ENCODE measurements at regions of chr2 and their contacts with region 1.

Region 1: DNA sequence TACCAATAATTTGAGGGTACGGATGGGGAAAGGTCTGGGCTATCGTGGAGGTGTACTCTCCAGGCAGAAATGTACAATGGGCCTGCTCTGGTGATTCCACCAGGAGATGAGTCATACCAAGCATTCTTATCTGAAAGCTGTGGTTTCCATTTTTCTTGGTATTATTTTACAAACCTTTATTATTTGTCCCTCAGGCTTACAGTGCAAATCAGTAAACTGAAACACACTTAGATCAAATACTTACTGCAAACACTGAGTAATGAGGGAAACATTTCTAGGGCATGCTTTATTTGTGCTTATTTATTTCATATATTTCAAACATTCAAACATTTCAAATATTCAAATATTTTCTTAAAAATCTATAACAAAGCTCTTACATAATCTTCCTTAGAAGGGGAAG is 319.8 kb downstream of the RND3 start:
- DNase-seq: peak; percentile 95
- ATAC-seq: peak; percentile 71
- H3K4me3 ChIP-seq: no peak overlapping the region; the same call in 1 of the 2 replicates
- H3K27ac ChIP-seq: peak overlapping the region; percentile 96
- H3K4me1 ChIP-seq: peaks cover 52% of the 10 kb centered on the region
- H3K27me3 ChIP-seq: no peaks in the 10 kb centered on the region
- CTCF ChIP-seq: no peak

Region 2: DNA sequence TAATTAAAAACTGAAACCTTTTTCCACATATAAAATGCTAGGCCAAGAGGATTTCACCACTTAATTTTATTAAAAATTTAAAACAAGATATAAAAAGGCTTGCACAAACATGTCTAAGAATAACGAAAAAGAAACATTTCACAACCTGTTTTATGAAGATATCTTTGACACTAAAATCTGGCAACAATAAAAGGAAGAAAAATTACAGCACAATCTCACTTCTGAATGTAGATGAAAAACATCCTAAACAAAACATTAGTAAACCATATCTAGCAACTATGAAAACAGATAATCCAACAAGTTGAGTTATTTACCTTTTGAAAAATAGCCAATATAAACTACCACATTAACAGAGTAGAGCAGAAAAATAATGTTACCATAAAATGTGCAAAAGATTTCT is 394.7 kb before region 1 on chr2:
- CTCF ChIA-PET with region 1: no interaction called
- POLR2A ChIA-PET with region 1: interaction called, 9 read pairs
- intact Hi-C with region 1: loop called (anchors 10 kb)
- DNase-seq: no peak
- ATAC-seq: no peak
- H3K4me3 ChIP-seq: no peak overlapping the region
- H3K27ac ChIP-seq: no peak overlapping the region
- H3K4me1 ChIP-seq: peaks cover 40% of the 10 kb centered on the region
- H3K27me3 ChIP-seq: no peaks in the 10 kb centered on the region
- CTCF ChIP-seq: no peak

Region 3: DNA sequence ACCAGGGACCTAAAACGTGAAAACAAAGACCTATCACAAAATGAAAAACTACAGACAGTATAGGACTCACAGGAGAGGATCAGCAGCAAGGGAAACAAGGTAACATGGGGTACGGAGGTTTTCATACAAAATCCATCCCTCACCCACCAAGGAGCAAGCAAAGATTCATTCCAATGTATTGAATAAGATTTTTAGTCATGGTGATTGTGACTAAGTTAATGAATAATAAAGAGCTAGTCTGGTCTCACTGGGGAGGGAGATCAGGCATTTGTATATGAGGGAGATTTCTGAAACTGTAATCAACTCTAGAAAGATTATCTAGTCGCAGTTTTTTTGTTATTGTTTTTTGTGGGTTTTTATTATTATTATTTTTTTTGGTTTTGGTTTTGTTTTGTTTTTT is 243.7 kb before region 1 on chr2:
- CTCF ChIA-PET with region 1: no interaction called
- POLR2A ChIA-PET with region 1: no interaction called
- intact Hi-C with region 1: loop called (anchors 10 kb)
- DNase-seq: peak; percentile 61
- ATAC-seq: no peak
- H3K4me3 ChIP-seq: no peak overlapping the region
- H3K27ac ChIP-seq: peak overlapping the region; percentile 82
- H3K4me1 ChIP-seq: peaks cover 31% of the 10 kb centered on the region
- H3K27me3 ChIP-seq: no peaks in the 10 kb centered on the region
- CTCF ChIP-seq: no peak

Region 4: GRCh38 chr2:150133623-150134022 is 34.1 kb before region 1 on chr2:
- CTCF ChIA-PET with region 1: no interaction called
- POLR2A ChIA-PET with region 1: no interaction called
- intact Hi-C with region 1: loop called (anchors 5 kb)
- DNase-seq: peak; percentile 97
- ATAC-seq: peak; percentile 97
- H3K4me3 ChIP-seq: no peak overlapping the region
- H3K27ac ChIP-seq: peak overlapping the region; percentile 77
- H3K4me1 ChIP-seq: peaks cover 21% of the 10 kb centered on the region
- H3K27me3 ChIP-seq: no peaks in the 10 kb centered on the region
- CTCF ChIP-seq: no peak

Region 5: GRCh38 chr2:150478200-150478974 is 310.7 kb after region 1 on chr2:
- CTCF ChIA-PET with region 1: no interaction called
- POLR2A ChIA-PET with region 1: no interaction called
- intact Hi-C with region 1: loop called (anchors 5 kb)
- DNase-seq: peak; percentile 91
- ATAC-seq: peak; percentile 20
- H3K4me3 ChIP-seq: peak overlapping the region; percentile 58
- H3K27ac ChIP-seq: peak overlapping the region; percentile 98
- H3K4me1 ChIP-seq: peaks cover 98% of the 10 kb centered on the region
- H3K27me3 ChIP-seq: no peaks in the 10 kb centered on the region
- CTCF ChIP-seq: no peak

Measured in PC-3 (cell line).